Activated CD4-positive, alpha-beta T cell treated with anti-CD3 and anti-CD28 coated beads for 36 hours (primary cell): ENCODE measurements at regions of chr3 and their contacts with region 1.

Region 1: GRCh38 chr3:10366651-10367101 is 45.8 kb upstream of the SEC13 start:
- DNase-seq: peak; percentile 78
- ATAC-seq: peak; percentile 83
- H3K4me3 Mint-ChIP-seq: peak overlapping the region; percentile 1
- H3K27ac Mint-ChIP-seq: peak overlapping the region; percentile 29
- H3K4me1 Mint-ChIP-seq: peaks cover 48% of the 10 kb centered on the region
- H3K27me3 Mint-ChIP-seq: peaks cover 20% of the 10 kb centered on the region

Region 2: GRCh38 chr3:10154839-10155344 is 211.8 kb before region 1 on chr3:
- CTCF ChIA-PET with region 1: no interaction called
- POLR2A ChIA-PET with region 1: interaction called, 12 read pairs
- intact Hi-C with region 1: no loop called
- DNase-seq: no peak
- ATAC-seq: peak; percentile 44
- H3K4me3 Mint-ChIP-seq: no peak overlapping the region
- H3K27ac Mint-ChIP-seq: no peak overlapping the region
- H3K4me1 Mint-ChIP-seq: peaks cover 1% of the 10 kb centered on the region
- H3K27me3 Mint-ChIP-seq: no peaks in the 10 kb centered on the region

Region 3: DNA sequence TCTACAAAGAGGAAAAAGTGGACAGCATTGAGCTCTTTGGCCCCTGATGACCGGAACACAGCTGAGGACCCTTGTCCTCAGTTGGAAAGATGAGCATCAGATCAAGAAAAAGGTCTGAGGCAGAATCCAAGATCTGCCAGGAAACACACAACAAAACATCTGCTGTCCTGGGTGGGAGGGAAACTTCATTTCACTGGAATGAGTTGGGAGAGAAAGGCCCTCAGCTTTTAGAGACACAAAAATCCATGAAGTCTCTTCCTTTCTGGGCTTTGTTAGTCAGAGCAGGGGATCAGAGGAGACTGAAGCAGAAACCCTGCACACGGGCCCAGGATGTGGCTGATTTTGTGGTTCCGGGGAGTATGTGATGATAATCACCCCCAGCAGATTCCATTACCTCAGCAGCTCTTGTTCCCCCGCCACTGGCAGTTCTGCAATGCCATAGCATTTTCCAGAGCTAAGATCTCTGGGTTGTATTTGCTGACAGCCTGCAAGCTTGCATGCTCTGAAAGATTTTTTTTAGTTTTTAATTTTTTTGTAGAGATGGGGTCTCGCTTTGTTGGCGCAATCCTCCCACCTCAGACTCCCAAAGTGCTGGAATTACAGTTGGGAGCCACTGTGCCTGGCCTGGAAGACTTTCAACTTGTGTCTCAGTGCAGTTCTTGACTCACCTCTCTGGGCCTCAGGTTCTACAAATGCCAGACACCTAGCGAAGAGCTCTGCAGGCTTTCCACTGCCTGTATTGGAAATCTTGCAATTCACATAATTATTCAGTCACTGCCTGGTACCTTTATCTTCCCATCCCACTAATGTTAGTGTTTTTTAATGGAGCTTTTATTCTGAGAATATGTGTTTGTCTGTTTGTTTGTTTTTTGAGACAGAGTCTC is 124.3 kb before region 1 on chr3:
- CTCF ChIA-PET with region 1: no interaction called
- POLR2A ChIA-PET with region 1: no interaction called
- intact Hi-C with region 1: no loop called
- DNase-seq: peak; percentile 91
- ATAC-seq: peak; percentile 94
- H3K4me3 Mint-ChIP-seq: peak overlapping the region; percentile 42
- H3K27ac Mint-ChIP-seq: peak overlapping the region; percentile 93
- H3K4me1 Mint-ChIP-seq: peaks cover 62% of the 10 kb centered on the region
- H3K27me3 Mint-ChIP-seq: no peaks in the 10 kb centered on the region

Region 4: DNA sequence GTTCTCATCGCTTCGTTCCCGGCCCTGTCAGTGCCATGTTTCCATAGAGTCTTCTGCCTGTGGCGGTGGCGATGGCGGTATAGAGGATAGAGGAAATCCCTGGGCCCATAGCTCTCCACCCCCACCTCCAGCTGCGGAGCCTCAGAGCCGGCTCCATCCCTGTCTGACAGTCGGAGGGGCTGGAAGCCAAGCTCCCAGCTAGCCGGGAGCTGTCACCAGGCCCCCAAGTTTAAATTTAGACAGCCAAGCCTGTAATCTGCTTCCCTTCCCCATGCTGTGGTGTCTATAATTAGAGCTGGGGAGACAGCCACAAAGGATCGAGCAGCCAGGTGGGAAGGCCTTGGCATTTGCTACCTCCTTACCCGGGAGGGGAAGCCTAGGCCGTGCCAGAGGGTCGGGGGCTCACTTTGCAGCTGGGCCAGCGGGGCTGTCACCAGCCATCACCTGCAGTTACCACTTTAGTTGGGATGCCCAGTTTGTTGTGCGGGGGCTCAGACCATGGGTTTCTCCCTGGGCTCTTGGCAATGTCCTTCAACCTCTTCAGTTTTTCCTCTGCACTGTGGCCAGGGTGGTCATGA is 10.6 kb after region 1 on chr3:
- CTCF ChIA-PET with region 1: no interaction called
- POLR2A ChIA-PET with region 1: no interaction called
- intact Hi-C with region 1: no loop called
- DNase-seq: no peak
- ATAC-seq: no peak
- H3K4me3 Mint-ChIP-seq: no peak overlapping the region
- H3K27ac Mint-ChIP-seq: no peak overlapping the region
- H3K4me1 Mint-ChIP-seq: no peaks in the 10 kb centered on the region
- H3K27me3 Mint-ChIP-seq: no peaks in the 10 kb centered on the region

Region 5: DNA sequence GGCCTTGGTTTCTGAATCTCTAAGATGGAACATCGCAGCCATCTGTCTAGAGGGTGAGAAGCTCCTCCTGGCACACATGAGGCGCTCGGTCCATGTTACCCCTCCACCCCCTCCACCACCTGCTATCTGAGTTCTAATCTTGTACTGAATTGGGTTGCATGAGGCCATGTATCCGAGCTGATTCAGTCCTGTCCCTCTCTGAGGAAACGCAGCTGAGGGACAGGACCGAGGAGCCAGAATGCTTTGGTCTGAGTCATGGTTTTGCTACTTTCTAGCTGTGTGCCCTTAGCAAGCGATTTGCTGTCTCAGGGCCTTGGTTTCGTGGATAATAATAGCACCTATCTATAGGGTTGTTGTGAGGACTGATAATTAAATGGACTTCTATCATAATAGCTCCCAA is 42.0 kb after region 1 on chr3:
- CTCF ChIA-PET with region 1: no interaction called
- POLR2A ChIA-PET with region 1: no interaction called
- intact Hi-C with region 1: no loop called
- DNase-seq: no peak
- ATAC-seq: no peak
- H3K4me3 Mint-ChIP-seq: no peak overlapping the region
- H3K27ac Mint-ChIP-seq: no peak overlapping the region
- H3K4me1 Mint-ChIP-seq: peaks cover 3% of the 10 kb centered on the region
- H3K27me3 Mint-ChIP-seq: no peaks in the 10 kb centered on the region

Region 6: GRCh38 chr3:11626084-11626463 is 1259.4 kb after region 1 on chr3:
- CTCF ChIA-PET with region 1: no interaction called
- POLR2A ChIA-PET with region 1: no interaction called
- intact Hi-C with region 1: loop called in 1 of 2 experiments (anchors 10 kb)
- DNase-seq: peak; percentile 44
- ATAC-seq: peak; percentile 67
- H3K4me3 Mint-ChIP-seq: peak overlapping the region; percentile 26
- H3K27ac Mint-ChIP-seq: peak overlapping the region; percentile 66
- H3K4me1 Mint-ChIP-seq: peaks cover 67% of the 10 kb centered on the region
- H3K27me3 Mint-ChIP-seq: no peaks in the 10 kb centered on the region